Esophagus muscularis mucosa (tissue), 4 donors: ENCODE measurements at regions of chr9 and their contacts with region 1.

Region 1: DNA sequence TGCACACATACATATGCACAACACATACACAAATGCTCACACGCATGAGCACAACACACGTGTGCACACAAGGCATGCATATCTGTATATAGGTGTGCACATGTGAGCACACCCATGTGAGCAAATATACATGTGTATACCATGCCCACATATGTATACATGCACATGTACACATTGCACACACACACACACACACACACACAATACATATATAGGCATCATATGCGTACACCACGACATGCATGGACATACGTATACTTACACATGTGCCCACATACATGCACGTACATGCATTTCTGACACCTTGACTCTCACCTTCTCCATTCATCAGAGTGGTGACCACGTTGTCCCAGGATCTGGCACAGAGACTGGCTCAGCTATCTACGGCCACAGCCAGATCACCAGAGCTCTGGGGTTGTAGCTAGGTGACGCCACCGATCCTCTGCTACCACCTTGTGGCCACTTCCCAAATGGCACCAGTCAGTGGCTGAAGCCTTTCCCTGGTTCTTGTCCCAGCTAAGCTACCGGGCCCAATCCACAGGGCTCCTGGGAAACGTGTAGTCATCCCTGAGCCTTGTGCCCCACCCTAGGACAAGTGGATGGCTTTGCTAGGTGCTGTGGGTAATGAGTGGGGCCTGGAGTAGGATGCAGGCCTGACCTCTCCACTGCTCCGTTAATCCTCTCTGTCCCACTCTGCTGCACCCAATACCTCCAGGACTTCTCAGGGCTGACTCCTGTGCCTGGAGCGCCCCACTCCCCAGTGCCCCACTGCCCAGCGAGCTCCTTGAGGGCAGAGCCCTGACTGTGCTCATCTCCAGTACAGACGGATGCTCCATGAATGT is 194.4 kb downstream of the RGS3 start:
- DNase-seq: peak; percentile 95
- H3K4me3 ChIP-seq: no peak overlapping the region
- H3K27ac ChIP-seq: no peak overlapping the region
- H3K4me1 ChIP-seq: peaks cover 28 to 35% (median 32%) of the 10 kb centered on the region in 4 donors
- H3K27me3 ChIP-seq: peaks cover 0 to 13% (median 0%) of the 10 kb centered on the region in 4 donors
- CTCF ChIP-seq: peak; percentile 87 to 98 (median 96)
- EP300 ChIP-seq: no peak
- POLR2A ChIP-seq: no peak

Region 2: DNA sequence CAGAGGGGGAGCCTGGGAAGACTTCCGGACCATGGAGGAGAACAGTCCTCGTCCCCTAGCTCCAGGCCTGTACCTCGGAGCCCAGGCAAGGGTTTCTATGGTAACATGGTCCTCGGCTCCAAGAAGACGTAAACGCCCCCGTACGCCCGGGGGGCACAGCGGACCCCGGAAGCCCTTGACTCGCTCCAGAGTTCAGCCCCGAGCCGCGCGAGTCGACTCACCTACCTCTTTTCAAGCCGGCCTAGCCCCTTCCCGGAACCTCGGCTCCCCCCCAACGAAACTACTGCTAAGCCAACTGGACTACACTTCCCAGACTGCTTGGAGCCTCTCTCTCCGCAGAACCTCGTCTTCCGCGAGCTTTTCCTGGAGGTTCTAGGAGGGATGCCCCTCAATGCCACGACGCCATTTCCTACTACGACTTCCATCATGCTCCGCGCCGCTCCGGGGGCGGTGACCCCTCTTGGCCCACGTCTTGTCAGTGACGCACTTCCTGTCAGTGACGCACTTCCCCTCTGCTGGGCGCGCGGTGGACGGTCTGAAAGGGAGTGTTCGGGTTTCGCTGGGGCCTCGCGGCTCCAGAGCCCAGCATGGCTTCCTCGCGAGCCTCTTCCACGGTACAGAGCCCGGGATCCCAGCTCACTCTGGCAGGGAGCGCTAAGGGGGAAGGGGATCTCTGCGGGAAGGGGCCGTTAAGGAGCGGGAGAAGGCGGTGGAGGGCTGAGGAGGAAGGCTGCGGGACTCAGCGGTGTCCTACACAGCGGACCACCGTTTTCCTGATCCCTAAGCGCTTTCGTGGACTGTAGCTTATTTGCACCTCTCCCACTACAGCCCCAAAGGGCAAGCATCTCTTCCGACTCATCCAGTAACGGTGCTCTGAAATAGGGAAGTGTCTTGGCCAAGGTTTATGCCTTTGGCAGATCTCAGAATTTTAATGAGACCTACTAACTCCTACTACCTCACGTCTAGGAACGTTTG is 382.5 kb before region 1 on chr9 and contains the starts of genes CDC26 and PRPF4:
- intact Hi-C with region 1: loop called (anchors 5 kb)
- DNase-seq: peak; percentile 100
- H3K4me3 ChIP-seq: peak within 1 kb of the TSS; percentile 68 to 90 (median 82)
- H3K27ac ChIP-seq: peak within 1 kb of the TSS; percentile 93 to 98 (median 94)
- H3K4me1 ChIP-seq: peaks cover 30 to 43% (median 33%) of the 10 kb centered on the region in 4 donors
- H3K27me3 ChIP-seq: no peaks in the 10 kb centered on the region
- CTCF ChIP-seq: peak in 1 of 3 experiments; percentile 4
- EP300 ChIP-seq: no peak
- POLR2A ChIP-seq: peak; percentile 86
- total RNA-seq, gene CDC26: 41.5 to 77.2 (median 48.5) TPM
- total RNA-seq, gene PRPF4: 12.0 to 18.1 (median 16.3) TPM

Region 3: DNA sequence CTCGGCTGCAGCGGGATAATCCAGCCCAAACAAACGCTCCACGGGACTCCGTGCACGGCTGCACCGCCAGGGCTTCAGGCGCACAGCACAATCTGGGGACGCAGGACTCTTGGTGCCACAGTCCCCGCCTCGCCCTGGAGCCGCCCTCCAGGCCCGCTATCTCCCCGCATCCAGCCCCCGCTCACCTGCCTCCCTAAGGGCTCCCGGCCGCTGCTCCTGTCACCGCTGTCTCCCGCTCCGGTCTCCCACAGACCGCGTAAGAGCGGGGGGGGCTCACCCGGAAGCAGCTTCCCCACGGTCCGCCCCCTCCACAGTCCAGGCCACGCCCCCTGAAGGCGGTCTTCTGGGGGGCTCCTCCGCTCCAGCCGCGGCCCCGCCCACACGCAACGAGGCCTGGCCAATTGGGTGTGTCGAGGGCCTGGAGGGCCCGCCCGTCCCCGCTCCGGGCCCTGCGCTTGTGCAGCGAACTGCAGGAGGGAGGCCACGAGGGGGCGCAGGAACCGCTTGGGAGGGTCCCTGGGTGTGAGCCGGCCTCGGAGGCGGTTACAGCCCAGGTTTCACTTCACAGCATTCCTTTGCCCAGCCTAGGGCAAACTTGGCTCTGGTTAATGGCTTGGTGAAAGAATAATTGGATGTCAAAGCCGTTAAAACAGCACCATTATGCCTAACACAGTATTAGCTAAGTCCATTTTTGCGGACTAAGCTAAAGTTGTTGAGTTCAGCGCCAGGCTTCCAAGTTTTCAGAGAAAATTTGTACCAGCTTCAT is 256.7 kb before region 1 on chr9 and contains the start of gene ALAD:
- intact Hi-C with region 1: loop called (anchors 5 kb)
- DNase-seq: peak; percentile 99
- H3K4me3 ChIP-seq: peak within 1 kb of the TSS; percentile 79 to 95 (median 83)
- H3K27ac ChIP-seq: peak within 1 kb of the TSS; percentile 70 to 82 (median 76)
- H3K4me1 ChIP-seq: peaks cover 26 to 27% (median 27%) of the 10 kb centered on the region in 4 donors
- H3K27me3 ChIP-seq: no peaks in the 10 kb centered on the region
- CTCF ChIP-seq: peak; percentile 87 to 97 (median 94)
- EP300 ChIP-seq: no peak
- POLR2A ChIP-seq: no peak
- total RNA-seq, gene ALAD: 18.2 to 31.1 (median 28.6) TPM

Region 4: GRCh38 chr9:113446323-113446740 is 211.6 kb before region 1 on chr9:
- intact Hi-C with region 1: loop called (anchors 2 kb)
- DNase-seq: no peak
- H3K4me3 ChIP-seq: no peak overlapping the region
- H3K27ac ChIP-seq: peak overlapping the region in 3 of 4 donors; percentile 15 to 27 (median 21)
- H3K4me1 ChIP-seq: peaks cover 4 to 21% (median 14%) of the 10 kb centered on the region in 4 donors
- H3K27me3 ChIP-seq: no peaks in the 10 kb centered on the region
- CTCF ChIP-seq: peak; percentile 67 to 71 (median 69)
- EP300 ChIP-seq: no peak
- POLR2A ChIP-seq: no peak

Region 5: GRCh38 chr9:113591001-113591898 is 66.7 kb before region 1 on chr9:
- intact Hi-C with region 1: loop called (anchors 1 kb)
- DNase-seq: peak; percentile 96
- H3K4me3 ChIP-seq: no peak overlapping the region
- H3K27ac ChIP-seq: peak overlapping the region; percentile 36 to 83 (median 72)
- H3K4me1 ChIP-seq: peaks cover 74 to 92% (median 87%) of the 10 kb centered on the region in 4 donors
- H3K27me3 ChIP-seq: no peaks in the 10 kb centered on the region
- CTCF ChIP-seq: peak; percentile 88 to 97 (median 89)
- EP300 ChIP-seq: no peak
- POLR2A ChIP-seq: no peak

Region 6: GRCh38 chr9:113705928-113706519 is 48.1 kb after region 1 on chr9:
- intact Hi-C with region 1: no loop called
- DNase-seq: no peak
- H3K4me3 ChIP-seq: no peak overlapping the region
- H3K27ac ChIP-seq: no peak overlapping the region
- H3K4me1 ChIP-seq: no peaks in the 10 kb centered on the region
- H3K27me3 ChIP-seq: peaks cover 0 to 5% (median 0%) of the 10 kb centered on the region in 4 donors
- CTCF ChIP-seq: no peak
- EP300 ChIP-seq: no peak
- POLR2A ChIP-seq: no peak